OCI-LY7 (cell line): ENCODE measurements at regions of chr19 and their contacts with region 1.

Region 1: DNA sequence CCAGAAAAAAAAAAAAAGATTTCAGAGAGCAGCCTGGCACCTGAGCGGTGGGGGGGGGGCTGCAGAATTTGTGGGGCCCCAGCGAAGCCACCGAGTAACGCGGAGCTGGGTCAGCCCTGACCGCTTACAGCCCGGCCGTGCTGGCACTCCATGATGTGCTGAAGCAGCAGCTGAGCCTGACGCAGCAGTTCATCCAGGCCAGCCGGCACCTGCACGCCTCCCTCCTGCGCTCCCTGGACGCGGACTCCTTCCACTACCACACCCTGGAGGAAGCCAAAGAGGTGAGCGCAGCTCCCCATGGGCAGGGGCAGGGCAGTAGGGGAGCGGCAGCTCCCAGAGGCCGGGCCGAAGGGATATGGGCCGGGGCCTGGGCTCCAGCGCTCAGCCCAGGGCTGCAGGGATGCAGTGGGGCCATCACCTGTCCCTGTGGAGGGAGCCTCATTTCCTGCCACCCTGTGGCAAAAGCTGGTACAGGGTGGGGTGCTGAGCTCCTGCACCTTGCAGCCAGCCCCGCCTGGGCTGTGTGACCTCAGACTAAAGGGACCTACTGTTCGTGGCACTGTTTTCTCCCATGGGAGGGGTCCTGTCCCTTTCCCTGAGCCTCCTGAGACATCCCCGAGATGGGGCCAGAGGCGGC is 18.3 kb downstream of the C19orf44 start:
- DNase-seq: peak; percentile 34
- H3K4me3 ChIP-seq: no peak overlapping the region
- H3K27ac ChIP-seq: no peak overlapping the region
- H3K4me1 ChIP-seq: no peaks in the 10 kb centered on the region
- CTCF ChIP-seq: peak; percentile 48

Region 2: GRCh38 chr19:16441661-16442162 is 72.8 kb before region 1 on chr19:
- CTCF ChIA-PET with region 1: interaction called, 5 read pairs
- POLR2A ChIA-PET with region 1: no interaction called
- intact Hi-C with region 1: loop called (anchors 1 kb)
- DNase-seq: peak; percentile 71
- H3K4me3 ChIP-seq: peak overlapping the region; percentile 1
- H3K27ac ChIP-seq: peak overlapping the region; percentile 96
- H3K4me1 ChIP-seq: peaks cover 87% of the 10 kb centered on the region
- CTCF ChIP-seq: peak; percentile 83